H1 (cell line): ENCODE measurements at regions of chr22 and their contacts with region 1.

Region 1: GRCh38 chr22:50030297-50031188 is 18.0 kb upstream of the IL17REL start:
- DNase-seq: peak; percentile 57 to 92
- H3K4me3 ChIP-seq: peak overlapping the region in 1 of 4 experiments; percentile 51; a peak in 2 of 8 replicates
- H3K27ac ChIP-seq: no peak overlapping the region
- H3K4me1 ChIP-seq: peaks cover 0 to 3% (median 0%) of the 10 kb centered on the region in 4 experiments; a peak in 2 of 7 replicates
- H3K27me3 ChIP-seq: peaks cover 2 to 24% (median 11%) of the 10 kb centered on the region in 4 experiments; a peak in 6 of 7 replicates
- CTCF ChIP-seq: peak; percentile 90 to 98 (median 92)
- EP300 ChIP-seq: no peak
- POLR2A ChIP-seq: no peak
- RAD21 ChIP-seq: peak; percentile 96 to 97

Region 2: GRCh38 chr22:49906071-49906932 is 124.2 kb before region 1 on chr22:
- CTCF ChIA-PET with region 1: no interaction called
- POLR2A ChIA-PET with region 1: no interaction called
- DNase-seq: no peak
- H3K4me3 ChIP-seq: no peak overlapping the region
- H3K27ac ChIP-seq: no peak overlapping the region
- H3K4me1 ChIP-seq: no peaks in the 10 kb centered on the region
- H3K27me3 ChIP-seq: no peaks in the 10 kb centered on the region
- CTCF ChIP-seq: no peak
- EP300 ChIP-seq: no peak
- POLR2A ChIP-seq: no peak
- RAD21 ChIP-seq: no peak

Region 3: DNA sequence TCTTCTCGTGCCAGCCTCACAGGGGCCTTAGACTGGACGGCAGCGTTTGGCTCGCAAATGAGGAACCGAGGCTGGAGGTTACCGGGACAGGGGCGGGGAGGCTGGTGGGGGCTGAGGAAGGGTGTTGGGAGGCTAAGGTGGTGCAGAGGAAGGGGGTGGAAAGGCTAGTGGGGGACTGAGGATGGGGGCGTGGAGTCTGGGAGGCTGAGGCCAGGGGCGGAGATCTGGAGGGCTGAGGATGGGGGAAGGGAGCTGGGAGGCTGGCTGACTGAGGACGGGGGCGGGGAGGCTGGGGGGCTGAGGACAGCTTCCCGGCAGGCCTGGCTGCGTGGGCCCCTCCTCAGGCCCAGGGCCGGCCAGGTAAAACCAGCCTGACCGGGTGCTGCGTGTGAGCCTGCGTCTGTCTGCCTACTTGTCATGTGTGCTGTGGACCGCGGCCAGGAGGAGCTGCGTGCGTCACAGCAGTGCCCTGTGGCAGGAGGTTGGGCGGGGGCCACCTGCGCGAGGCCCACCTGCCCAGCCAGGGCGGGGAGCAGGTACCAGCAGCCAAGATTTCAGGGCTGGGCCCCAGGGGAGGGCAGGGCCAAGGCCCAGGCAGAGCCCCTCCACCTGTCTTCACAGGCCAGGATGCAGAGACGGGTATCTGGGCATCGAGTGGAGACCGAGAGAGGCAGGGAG is 79.4 kb before region 1 on chr22:
- CTCF ChIA-PET with region 1: interaction called, 11 read pairs
- POLR2A ChIA-PET with region 1: no interaction called
- DNase-seq: no peak
- H3K4me3 ChIP-seq: no peak overlapping the region
- H3K27ac ChIP-seq: no peak overlapping the region
- H3K4me1 ChIP-seq: peaks cover 0 to 32% (median 17%) of the 10 kb centered on the region in 4 experiments; a peak in 5 of 7 replicates
- H3K27me3 ChIP-seq: no peaks in the 10 kb centered on the region
- CTCF ChIP-seq: no peak
- EP300 ChIP-seq: no peak
- POLR2A ChIP-seq: no peak
- RAD21 ChIP-seq: no peak

Region 4: GRCh38 chr22:49986325-49986724 is 44.2 kb before region 1 on chr22:
- CTCF ChIA-PET with region 1: interaction called, 27 read pairs
- POLR2A ChIA-PET with region 1: no interaction called
- DNase-seq: no peak
- H3K4me3 ChIP-seq: no peak overlapping the region
- H3K27ac ChIP-seq: no peak overlapping the region
- H3K4me1 ChIP-seq: peaks cover 0 to 4% (median 0%) of the 10 kb centered on the region in 4 experiments; a peak in 1 of 7 replicates
- H3K27me3 ChIP-seq: peaks cover 4 to 18% (median 13%) of the 10 kb centered on the region in 4 experiments
- CTCF ChIP-seq: no peak
- EP300 ChIP-seq: no peak
- POLR2A ChIP-seq: no peak
- RAD21 ChIP-seq: no peak

Region 5: DNA sequence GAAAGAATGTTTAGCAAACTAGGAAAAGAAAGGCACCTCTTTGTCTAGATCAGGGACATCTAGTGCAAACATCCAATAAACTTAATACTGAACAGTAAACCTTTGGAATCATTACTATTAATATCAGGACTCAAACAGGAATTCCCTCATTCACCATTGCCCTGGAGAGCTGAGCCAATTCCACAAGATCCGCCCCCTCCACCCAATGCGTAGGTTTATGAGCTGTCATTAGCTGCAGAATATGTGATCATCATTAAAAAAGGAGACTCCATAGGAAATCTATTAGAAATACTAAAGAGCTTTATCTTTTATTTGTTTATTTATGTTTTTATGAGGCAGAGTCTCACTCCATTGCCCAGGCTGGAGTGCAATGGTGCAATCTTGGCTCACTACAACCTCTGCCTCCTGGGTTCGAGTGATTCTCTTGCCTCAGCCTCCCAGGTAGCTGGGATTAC is 23.5 kb before region 1 on chr22:
- CTCF ChIA-PET with region 1: interaction called, 11 read pairs
- POLR2A ChIA-PET with region 1: no interaction called
- DNase-seq: no peak
- H3K4me3 ChIP-seq: no peak overlapping the region
- H3K27ac ChIP-seq: no peak overlapping the region
- H3K4me1 ChIP-seq: peaks cover 0 to 13% (median 9%) of the 10 kb centered on the region in 4 experiments; a peak in 6 of 7 replicates
- H3K27me3 ChIP-seq: peaks cover 2 to 22% (median 17%) of the 10 kb centered on the region in 4 experiments
- CTCF ChIP-seq: no peak
- EP300 ChIP-seq: no peak
- POLR2A ChIP-seq: no peak
- RAD21 ChIP-seq: no peak

Region 6: DNA sequence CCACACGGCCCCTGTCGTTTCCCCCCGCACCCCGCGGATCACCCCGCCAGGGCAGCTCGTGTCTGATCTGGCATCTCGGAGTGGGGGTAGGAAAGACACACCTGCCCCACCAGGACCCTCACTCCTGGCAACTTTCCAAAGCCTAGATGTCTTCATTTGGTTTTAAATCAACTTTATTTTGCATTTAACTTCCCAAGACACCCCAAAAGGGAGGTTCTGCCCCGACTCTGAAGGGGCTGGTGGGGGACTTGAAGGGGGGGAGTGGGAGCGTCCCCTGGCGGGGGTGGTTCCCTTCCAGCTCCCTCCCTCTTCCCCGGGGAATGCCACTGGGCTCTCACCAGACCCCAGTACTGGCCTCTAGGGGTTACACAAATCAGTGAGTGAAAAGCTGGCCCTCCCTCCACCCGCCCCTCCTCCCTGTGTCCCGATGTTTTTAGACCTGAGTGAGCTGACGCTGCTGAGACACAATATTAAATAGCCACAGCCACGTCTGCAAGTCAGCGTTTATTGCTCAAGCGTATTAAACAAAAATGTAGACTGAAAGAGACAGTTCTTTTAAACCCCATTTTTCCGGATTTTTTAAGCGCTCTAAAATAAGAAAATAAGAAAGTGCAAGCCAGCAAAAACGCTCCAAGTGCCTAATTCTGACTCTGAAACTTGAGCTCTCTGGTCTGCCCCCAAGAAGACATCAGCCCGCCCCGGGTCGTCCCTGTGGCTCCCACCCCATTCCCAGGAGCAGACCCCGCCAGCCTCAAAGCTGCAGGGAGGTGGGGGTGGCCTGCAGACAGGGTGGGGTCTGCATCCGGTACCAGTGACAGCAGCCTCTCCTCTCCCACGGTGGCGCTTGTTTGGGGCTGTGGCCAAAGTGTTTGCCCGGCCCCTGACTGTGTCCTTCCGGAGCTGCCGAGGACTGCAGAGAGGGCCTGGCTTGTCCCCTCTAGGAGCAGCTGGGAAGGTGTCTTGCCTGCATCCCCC is 28.6 kb after region 1 on chr22:
- CTCF ChIA-PET with region 1: interaction called, 10 read pairs
- POLR2A ChIA-PET with region 1: no interaction called
- DNase-seq: peak in 1 of 2 experiments; percentile 27
- H3K4me3 ChIP-seq: peak overlapping the region; percentile 46 to 66 (median 56)
- H3K27ac ChIP-seq: no peak overlapping the region
- H3K4me1 ChIP-seq: peaks cover 0 to 11% (median 2%) of the 10 kb centered on the region in 4 experiments; a peak in 4 of 7 replicates
- H3K27me3 ChIP-seq: peaks cover 8 to 20% (median 11%) of the 10 kb centered on the region in 4 experiments
- CTCF ChIP-seq: peak; percentile 44 to 49 (median 48)
- EP300 ChIP-seq: no peak
- POLR2A ChIP-seq: no peak
- RAD21 ChIP-seq: peak; percentile 27 to 30; a peak in 3 of 4 replicates

Region 7: GRCh38 chr22:50089682-50090411 is 59.3 kb after region 1 on chr22 and contains the start of gene MOV10L1:
- CTCF ChIA-PET with region 1: no interaction called
- POLR2A ChIA-PET with region 1: no interaction called
- DNase-seq: no peak
- H3K4me3 ChIP-seq: no peak within 1 kb of the TSS
- H3K27ac ChIP-seq: no peak within 1 kb of the TSS
- H3K4me1 ChIP-seq: peaks cover 0 to 5% (median 4%) of the 10 kb centered on the region in 4 experiments; a peak in 5 of 7 replicates
- H3K27me3 ChIP-seq: no peaks in the 10 kb centered on the region; a peak in 2 of 7 replicates
- CTCF ChIP-seq: no peak
- EP300 ChIP-seq: no peak
- POLR2A ChIP-seq: no peak
- RAD21 ChIP-seq: no peak
- total RNA-seq, gene MOV10L1: not detected in 2 replicates